ENCODE measurements at regions of chr12 and their contacts with region 1.

Region 1: DNA sequence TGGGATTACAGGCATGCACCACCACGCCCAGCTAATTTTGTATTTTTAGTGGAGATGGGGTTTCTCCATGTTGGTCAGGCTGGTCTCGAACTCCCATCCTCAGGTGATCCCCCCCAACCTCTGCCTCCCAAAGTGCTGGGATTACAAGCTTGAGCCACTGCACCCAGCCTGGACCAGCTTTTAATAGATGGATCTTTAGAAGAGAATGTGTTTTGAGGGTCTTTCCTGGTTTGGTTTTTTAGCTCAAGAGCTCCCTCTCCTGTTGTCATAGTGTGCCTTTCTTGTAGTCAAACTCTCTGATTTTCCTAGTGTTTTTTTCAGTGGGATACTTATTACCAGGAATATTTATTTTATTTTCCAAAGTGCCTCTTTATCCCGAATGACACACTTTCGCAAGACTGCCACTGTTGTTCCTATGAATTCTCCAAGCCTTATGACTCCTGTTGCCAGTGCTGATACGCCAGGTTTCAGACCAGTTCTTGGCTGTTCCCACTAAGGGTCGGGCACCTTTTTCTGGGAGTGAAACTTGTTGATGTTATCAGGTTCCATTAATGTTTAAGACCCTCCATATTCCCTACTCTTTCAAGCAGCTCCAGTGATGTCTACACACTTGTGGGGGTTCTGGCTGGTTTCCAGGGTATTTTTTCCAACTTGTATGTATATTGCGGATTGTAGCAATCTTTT is 31.5 kb upstream of the LIMA1 start:
- DNase-seq: no peak
- H3K4me3 ChIP-seq: no peak overlapping the region
- H3K27ac ChIP-seq: no peak overlapping the region
- H3K4me1 ChIP-seq: no peaks in the 10 kb centered on the region
- H3K27me3 ChIP-seq: no peaks in the 10 kb centered on the region
- CTCF ChIP-seq: peak; percentile 9 to 77 (median 62)
- POLR2A ChIP-seq: no peak

Region 2: DNA sequence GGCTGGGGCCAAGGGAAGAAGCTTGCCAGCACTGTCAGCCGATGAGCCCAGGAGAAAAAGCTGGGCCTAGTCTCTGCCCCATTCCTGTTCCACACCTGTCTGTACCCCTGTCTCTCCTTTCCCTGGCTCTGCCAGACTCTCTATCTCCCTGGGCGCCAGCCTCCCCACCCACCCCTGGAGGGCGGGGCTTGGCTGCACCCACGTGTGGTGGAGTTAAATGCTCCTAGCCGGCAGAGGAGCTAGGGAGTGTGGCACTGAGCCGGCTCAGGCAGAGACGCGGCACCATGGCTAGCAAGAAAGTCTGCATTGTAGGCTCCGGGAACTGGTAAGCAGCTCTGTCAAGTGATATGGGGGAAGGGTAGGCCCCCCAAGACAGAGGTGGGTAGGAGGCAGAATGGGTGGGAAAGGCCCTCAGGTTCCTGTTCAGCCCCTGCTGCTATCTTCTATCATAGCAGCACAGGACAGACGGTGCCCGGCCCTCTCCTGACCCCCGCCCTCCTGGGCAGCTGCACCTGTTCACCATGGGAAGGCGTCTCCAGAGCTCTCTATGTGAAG is 210.9 kb before region 1 on chr12 and contains the start of gene GPD1:
- intact Hi-C with region 1: loop called (anchors 10 kb)
- DNase-seq: peak; percentile 77
- H3K4me3 ChIP-seq: no peak within 1 kb of the TSS
- H3K27ac ChIP-seq: no peak within 1 kb of the TSS
- H3K4me1 ChIP-seq: peaks cover 5% of the 10 kb centered on the region
- H3K27me3 ChIP-seq: no peaks in the 10 kb centered on the region
- CTCF ChIP-seq: peak in 2 of 4 experiments; percentile 11 to 23
- POLR2A ChIP-seq: peak; percentile 57
- total RNA-seq, gene GPD1: 0.27 to 3.4 TPM

Region 3: DNA sequence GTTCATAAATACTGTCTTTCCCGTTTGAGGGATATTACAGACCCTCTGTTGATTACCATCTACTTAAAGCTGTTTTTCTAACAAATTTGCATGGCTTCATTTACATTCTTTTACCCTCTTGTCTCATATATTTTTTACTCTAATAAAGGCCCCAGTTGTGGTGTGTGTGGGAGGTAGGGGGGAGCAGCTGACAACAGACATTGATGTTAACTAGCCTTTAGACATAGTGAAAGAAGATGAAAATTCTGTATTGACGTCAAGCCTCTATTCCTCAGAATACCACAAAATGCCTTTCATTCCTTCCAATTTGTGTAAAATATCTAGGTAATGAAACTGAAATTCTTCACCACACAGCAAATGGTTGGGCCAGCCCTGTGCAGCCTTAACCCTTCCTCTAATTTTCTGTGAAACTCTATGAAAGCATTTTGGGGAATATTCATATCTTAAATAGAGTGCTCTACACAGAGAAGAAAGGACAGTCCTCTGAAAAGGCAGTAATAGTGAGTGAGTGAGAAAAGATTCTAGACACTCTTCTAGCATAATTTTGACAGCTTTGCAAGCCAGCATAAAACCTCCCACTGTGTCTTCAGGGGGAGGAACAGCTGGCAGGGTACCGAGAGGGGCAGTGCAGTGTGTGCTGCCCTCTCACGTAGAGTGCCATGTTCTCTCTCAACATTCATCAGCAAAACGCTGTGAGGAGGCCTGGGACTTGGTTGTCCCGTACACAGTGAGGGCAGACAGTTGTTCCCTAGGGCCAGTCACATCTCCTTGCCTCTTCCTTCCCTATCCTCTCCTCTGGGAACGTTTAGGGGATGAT is 127.5 kb before region 1 on chr12:
- intact Hi-C with region 1: loop called (anchors 10 kb)
- DNase-seq: no peak
- H3K4me3 ChIP-seq: no peak overlapping the region
- H3K27ac ChIP-seq: peak overlapping the region; percentile 41 to 59
- H3K4me1 ChIP-seq: peaks cover 31% of the 10 kb centered on the region
- H3K27me3 ChIP-seq: no peaks in the 10 kb centered on the region
- CTCF ChIP-seq: no peak
- POLR2A ChIP-seq: no peak

Region 4: DNA sequence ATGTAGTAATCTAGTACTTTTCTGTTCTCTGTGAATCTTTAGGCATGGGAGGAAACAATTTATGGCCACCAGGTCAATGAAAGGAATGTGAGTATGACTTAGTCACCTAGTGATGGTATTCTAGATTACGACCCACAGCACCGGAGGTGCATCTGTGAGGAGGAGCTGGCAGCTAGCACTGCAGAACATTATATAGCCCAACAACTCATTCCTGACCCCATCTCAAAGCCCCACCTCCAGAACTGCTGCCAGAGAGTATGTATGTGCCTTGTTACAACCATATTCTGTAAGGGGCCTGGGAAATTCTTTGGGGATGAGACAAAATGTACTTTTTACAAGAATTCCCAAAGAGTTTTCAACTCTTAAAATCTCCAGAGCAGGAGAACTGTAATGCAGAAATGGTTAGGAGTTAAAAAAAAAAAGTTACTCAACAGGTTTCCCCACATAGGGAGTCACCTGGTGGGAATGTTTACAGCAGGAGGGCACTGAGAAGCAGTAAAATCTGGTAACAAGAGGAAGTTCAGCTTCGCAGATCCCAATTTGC is 112.7 kb before region 1 on chr12:
- intact Hi-C with region 1: no loop called
- DNase-seq: peak; percentile 67
- H3K4me3 ChIP-seq: no peak overlapping the region
- H3K27ac ChIP-seq: peak overlapping the region; percentile 65 to 67
- H3K4me1 ChIP-seq: peaks cover 8% of the 10 kb centered on the region
- H3K27me3 ChIP-seq: no peaks in the 10 kb centered on the region
- CTCF ChIP-seq: no peak
- POLR2A ChIP-seq: no peak

Region 5: GRCh38 chr12:50822082-50822481 is 507.3 kb after region 1 on chr12:
- intact Hi-C with region 1: no loop called
- DNase-seq: no peak
- H3K4me3 ChIP-seq: no peak overlapping the region
- H3K27ac ChIP-seq: no peak overlapping the region
- H3K4me1 ChIP-seq: no peaks in the 10 kb centered on the region
- H3K27me3 ChIP-seq: no peaks in the 10 kb centered on the region
- CTCF ChIP-seq: no peak
- POLR2A ChIP-seq: no peak